Heart left ventricle (tissue), 16 donors: ENCODE measurements at regions of chr13 and their contacts with region 1.

Region 1: DNA sequence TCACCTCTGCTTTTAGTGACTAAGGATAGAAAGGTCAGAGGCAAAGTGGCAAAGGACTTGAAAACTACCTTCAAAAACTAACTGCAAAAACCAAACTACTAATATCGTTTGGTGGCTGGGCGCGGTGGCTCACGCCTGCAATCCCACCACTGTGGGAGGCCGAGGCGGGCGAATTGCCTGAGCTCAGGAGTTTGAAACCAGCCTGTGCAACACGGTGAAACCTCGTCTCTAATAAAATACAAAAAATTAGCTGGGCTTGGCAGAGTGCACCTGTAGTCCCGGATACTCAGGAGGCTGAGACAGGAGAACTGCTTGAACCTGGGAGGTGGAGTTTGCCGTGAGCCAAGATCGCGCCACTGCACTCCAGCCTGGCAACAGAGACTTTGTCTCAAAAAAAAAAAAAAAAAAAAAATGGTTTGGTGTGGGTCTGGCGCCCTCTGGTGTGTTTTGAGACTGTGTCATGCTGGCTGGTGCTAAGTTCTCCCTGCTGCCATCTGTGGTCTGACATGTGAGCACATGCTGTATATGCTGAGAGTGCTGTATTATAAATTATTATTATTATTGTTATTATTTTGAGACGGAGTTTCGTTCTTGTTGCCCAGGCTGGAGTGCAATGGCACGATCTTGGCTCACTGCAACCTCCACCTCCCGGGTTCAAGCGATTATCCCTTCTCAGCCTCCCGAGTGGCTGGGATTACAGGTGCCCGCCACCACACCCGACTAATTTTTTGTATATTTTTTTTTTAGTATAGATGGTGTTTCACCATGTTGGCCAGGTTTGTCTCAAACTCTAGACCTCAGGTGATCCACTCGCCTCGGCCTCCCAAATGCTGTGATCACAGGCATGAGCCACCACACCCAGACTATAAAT is 36.0 kb upstream of the RNF17 start:
- DNase-seq: peak; percentile 44 to 65 (median 51)
- ATAC-seq: peak; percentile 90 to 97 (median 94)
- H3K4me3 ChIP-seq: no peak overlapping the region
- H3K27ac ChIP-seq: no peak overlapping the region
- H3K4me1 ChIP-seq: peaks cover 0 to 2% (median 0%) of the 10 kb centered on the region in 12 donors
- H3K27me3 ChIP-seq: no peaks in the 10 kb centered on the region
- CTCF ChIP-seq: peak; percentile 61 to 84 (median 74)
- POLR2A ChIP-seq: no peak

Region 2: DNA sequence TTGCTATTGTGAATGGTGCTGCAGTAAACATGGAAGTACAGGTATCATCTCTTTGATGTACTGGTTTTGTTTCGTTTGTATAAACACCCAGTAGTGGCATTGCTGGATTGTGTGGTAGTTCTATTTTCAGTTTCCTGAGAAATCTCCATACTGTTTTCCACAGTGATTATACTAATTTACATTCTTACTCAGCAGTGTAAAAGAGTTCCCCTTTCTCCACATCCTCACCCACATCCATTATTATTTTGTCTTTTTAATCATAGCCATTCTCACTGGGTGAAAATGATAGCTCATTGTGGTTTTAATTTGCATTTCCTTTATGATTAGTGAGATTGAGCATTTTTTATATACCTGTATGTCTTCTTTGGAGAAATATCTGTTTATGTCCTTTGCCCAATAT is 153.1 kb before region 1 on chr13:
- intact Hi-C with region 1: loop called in 1 of 10 experiments (anchors 5 kb)
- DNase-seq: no peak
- ATAC-seq: no peak
- H3K4me3 ChIP-seq: no peak overlapping the region
- H3K27ac ChIP-seq: no peak overlapping the region
- H3K4me1 ChIP-seq: no peaks in the 10 kb centered on the region
- H3K27me3 ChIP-seq: no peaks in the 10 kb centered on the region
- CTCF ChIP-seq: no peak
- POLR2A ChIP-seq: no peak

Region 3: DNA sequence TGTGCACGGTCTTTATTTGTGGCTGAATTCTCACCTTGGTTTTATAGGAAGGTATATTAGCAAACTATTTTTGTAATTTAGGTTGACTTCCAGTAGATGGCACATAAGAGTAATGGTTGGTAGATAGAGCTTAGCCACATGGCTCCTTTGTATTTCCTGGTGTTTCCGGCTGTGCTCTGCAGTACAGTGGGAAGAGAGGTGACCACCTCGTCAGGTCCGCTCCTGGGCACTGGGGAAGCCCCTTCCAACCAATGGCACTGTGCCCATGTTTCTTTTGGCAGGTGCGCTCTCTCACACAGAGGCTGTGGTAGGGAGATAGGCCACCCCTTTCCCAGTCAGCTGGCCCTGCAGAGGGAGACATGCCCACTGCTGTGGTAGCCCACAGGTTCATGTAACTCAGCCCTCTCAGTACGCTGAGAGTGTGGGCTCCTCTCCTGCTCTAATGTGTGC is 122.0 kb before region 1 on chr13:
- intact Hi-C with region 1: loop called in 1 of 10 experiments (anchors 10 kb)
- DNase-seq: no peak
- ATAC-seq: no peak
- H3K4me3 ChIP-seq: no peak overlapping the region
- H3K27ac ChIP-seq: no peak overlapping the region
- H3K4me1 ChIP-seq: no peaks in the 10 kb centered on the region
- H3K27me3 ChIP-seq: no peaks in the 10 kb centered on the region
- CTCF ChIP-seq: peak in 1 of 12 donors; percentile 11
- POLR2A ChIP-seq: no peak

Region 4: DNA sequence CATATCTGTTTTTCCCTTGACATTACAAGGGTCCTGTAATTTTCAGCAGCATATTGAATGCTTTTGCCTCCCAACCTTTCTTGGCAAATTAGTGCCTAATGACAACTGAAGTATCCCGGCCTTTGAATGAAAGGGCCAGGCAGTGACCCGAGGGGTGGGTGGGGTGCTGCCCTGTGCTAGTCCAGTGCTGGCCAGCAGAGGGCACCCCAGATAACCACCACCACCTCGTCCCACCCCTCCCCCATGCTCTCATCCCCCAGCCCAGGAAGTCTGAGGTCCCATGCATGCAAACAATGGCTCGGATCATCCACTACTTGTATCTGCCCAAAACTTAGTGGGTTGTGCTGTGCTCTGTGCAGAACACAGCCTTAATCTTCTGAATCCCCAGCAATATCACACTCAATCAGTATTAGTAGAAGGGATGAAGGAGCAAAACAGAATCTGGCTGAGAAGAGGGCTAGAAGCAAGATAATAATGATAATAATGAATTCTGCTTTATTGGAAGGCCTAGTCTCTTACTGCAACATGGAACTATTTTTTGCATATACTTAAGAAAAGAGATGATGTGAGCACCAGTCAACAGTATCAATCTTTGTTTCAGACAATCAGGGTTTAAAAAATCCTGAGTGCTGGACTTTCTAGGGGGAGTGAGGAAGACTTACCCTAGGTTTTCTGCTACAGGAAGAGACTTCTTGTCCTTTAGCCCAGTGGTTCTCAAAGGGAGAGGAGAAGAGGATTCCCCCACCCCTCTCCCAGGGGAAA is 43.9 kb before region 1 on chr13:
- intact Hi-C with region 1: loop called in 2 of 10 experiments (anchors 2 to 5 kb)
- DNase-seq: peak; percentile 41 to 74 (median 50)
- ATAC-seq: peak; percentile 61 to 88 (median 84)
- H3K4me3 ChIP-seq: no peak overlapping the region
- H3K27ac ChIP-seq: no peak overlapping the region
- H3K4me1 ChIP-seq: peaks cover 0 to 27% (median 15%) of the 10 kb centered on the region in 12 donors
- H3K27me3 ChIP-seq: peaks cover 12 to 29% (median 25%) of the 10 kb centered on the region in 9 donors
- CTCF ChIP-seq: peak; percentile 71 to 91 (median 80)
- POLR2A ChIP-seq: no peak

Region 5: GRCh38 chr13:24693862-24694471 is 34.0 kb before region 1 on chr13:
- intact Hi-C with region 1: loop called in 9 of 10 experiments (anchors 1 to 5 kb)
- DNase-seq: peak in 1 of 5 donors; percentile 17
- ATAC-seq: peak in 3 of 4 donors; percentile 71 to 81 (median 73)
- H3K4me3 ChIP-seq: no peak overlapping the region
- H3K27ac ChIP-seq: no peak overlapping the region
- H3K4me1 ChIP-seq: peaks cover 0 to 6% (median 0%) of the 10 kb centered on the region in 12 donors
- H3K27me3 ChIP-seq: peaks cover 0 to 18% (median 0%) of the 10 kb centered on the region in 9 donors
- CTCF ChIP-seq: peak; percentile 52 to 76 (median 63)
- POLR2A ChIP-seq: no peak

Region 6: DNA sequence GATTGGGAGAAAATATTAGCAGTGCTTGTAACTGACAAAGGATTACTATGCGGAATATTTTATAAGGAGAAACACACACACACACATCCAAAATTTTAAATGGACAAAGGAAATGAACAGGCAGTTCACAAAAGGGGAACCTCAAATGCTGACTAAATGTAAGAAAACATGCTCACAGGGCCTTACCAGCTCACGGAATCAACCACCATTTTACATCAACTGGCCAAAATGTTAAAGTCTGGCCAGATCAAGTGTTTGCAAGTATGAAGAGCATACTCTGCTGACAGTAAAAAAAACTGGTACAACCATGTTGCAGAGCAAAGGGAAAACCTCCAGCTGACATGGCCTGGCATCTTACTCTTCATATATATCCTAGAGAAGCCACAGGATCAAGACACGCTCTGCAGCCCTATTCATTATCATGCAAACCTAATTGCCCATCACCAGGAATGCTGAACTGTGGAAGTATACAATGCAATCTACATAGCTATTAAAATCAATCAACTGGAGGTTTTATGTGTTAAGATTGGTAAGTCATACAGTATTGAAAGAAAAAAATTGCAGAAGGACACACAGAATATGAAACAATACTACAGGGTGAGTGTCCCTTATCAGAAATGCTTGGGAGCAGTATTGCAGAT is 160.4 kb after region 1 on chr13:
- intact Hi-C with region 1: no loop called
- DNase-seq: no peak
- ATAC-seq: no peak
- H3K4me3 ChIP-seq: no peak overlapping the region
- H3K27ac ChIP-seq: no peak overlapping the region
- H3K4me1 ChIP-seq: no peaks in the 10 kb centered on the region
- H3K27me3 ChIP-seq: no peaks in the 10 kb centered on the region
- CTCF ChIP-seq: no peak
- POLR2A ChIP-seq: no peak